ENCODE measurements at regions of chr10 and their contacts with region 1.

Region 1: DNA sequence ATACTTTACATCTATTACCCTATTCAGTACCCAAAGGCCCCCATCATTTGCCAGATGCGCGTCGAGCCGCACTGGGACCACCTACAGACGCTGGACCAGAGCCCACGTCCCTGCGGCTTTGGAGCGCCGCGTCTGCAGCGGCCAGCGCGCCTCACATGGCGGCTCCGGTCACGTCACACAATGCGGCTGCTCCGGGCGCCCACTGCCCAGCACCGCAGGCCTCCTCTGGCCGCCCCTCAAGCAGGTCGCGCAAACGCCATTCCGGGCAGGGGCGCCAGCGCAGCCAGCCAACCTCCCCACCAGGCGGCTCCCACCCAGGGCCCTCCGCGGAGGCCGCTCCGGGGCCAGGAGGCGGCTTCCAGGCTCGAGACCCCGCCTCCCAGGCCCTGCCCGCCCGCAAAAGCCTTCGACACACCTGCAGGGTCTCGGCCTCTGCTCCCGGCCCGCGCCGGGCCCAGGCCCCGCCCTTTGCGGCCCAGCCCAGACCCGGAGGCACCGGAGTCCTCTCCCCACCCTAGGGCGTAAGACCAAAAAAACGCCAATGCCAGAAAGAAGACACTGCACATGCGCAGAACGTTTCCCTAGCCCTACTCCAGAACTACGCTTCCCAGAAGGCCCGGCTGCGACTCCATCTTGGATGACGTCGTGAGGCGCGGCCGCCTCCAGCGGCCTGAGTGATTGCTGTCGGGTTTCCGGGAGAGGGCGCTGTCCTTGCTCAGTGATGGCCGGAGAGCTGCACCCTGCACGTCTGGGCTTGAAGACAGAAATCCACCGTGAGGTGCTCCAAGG is at the start of gene ZNF25:
- DNase-seq: peak; percentile 94 to 99 (median 97)
- ATAC-seq: peak; percentile 87 to 89
- H3K4me3 Mint-ChIP-seq: peak within 1 kb of the TSS; percentile 83 to 98 (median 94)
- H3K27ac Mint-ChIP-seq: peak within 1 kb of the TSS; percentile 92 to 99 (median 96)
- H3K4me1 Mint-ChIP-seq: peaks cover 7 to 29% (median 26%) of the 10 kb centered on the region in 4 donors
- H3K27me3 Mint-ChIP-seq: no peaks in the 10 kb centered on the region
- polyA plus RNA-seq, gene ZNF25: 3.6 to 5.9 (median 5.3) TPM

Region 2: GRCh38 chr10:38010119-38010903 is 34.0 kb after region 1 on chr10 and contains the start of gene ZNF33A:
- POLR2A ChIA-PET with region 1: interaction called, 29 read pairs
- DNase-seq: peak; percentile 85 to 96 (median 92)
- ATAC-seq: peak; percentile 85 to 88
- H3K4me3 Mint-ChIP-seq: peak within 1 kb of the TSS; percentile 87 to 98 (median 94)
- H3K27ac Mint-ChIP-seq: peak within 1 kb of the TSS; percentile 98 to 100 (median 100)
- H3K4me1 Mint-ChIP-seq: peaks cover 17 to 48% (median 42%) of the 10 kb centered on the region in 4 donors
- H3K27me3 Mint-ChIP-seq: no peaks in the 10 kb centered on the region
- polyA plus RNA-seq, gene ZNF33A: 13.4 to 21.4 (median 19.3) TPM

Region 3: DNA sequence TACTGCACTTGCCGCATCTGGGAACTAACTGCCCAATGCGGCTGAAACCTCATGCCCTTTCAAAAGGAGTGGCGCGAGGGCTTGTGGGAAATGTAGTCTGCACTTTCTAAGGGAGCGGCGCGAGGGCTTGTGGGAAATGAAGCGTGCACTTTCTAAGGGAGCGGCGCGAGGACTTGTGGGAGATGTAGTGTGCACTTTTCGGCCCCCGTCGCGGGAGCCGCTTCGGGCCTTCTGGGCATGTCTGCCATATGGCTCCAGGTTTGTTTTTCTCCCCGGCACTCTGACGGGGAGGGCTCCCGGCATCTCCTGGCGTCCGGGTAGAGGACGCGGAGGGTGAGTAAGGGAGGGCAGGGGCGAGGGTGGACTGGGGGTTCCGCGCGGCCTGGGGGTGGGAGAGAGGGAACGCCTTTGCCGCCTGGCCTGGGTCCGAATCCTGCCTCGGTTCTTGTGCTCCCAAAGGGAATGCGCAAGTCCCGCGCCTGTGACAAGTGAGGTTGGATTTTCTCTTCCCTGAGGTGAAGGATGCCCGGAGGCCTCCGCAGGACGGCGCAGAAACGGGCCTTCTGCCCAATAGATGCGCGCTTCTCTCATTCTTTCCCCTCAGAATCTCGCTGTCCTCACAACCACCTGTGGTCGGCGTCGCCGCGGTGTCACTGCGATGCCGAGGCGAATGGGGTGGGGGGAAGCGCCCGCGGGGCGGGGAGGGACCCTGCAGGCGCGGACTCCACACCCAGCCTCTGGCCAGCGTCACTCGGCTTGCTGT is 118.1 kb after region 1 on chr10 and contains the start of gene ZNF37A:
- POLR2A ChIA-PET with region 1: interaction called, 10 read pairs
- DNase-seq: peak; percentile 67 to 94 (median 86)
- ATAC-seq: peak; percentile 96 to 97
- H3K4me3 Mint-ChIP-seq: peak within 1 kb of the TSS; percentile 82 to 97 (median 94)
- H3K27ac Mint-ChIP-seq: peak within 1 kb of the TSS; percentile 84 to 97 (median 95)
- H3K4me1 Mint-ChIP-seq: peaks cover 12 to 38% (median 29%) of the 10 kb centered on the region in 4 donors
- H3K27me3 Mint-ChIP-seq: no peaks in the 10 kb centered on the region
- polyA plus RNA-seq, gene ZNF37A: 1.9 to 4.7 (median 4.6) TPM

Measured in naive thymus-derived CD8-positive, alpha-beta T cell (primary cell).